ENCODE measurements at regions of chr18 and their contacts with region 1.

Region 1: GRCh38 chr18:79951578-79952455 is at the start of gene SLC66A2:
- DNase-seq: peak; percentile 80 to 98 (median 90)
- ATAC-seq: peak; percentile 94
- H3K4me3 ChIP-seq: peak within 1 kb of the TSS; percentile 65
- H3K4me3 Mint-ChIP-seq: peak within 1 kb of the TSS; percentile 78 to 93 (median 87)
- H3K27ac ChIP-seq: peak within 1 kb of the TSS; percentile 88
- H3K27ac Mint-ChIP-seq: peak within 1 kb of the TSS; percentile 55 to 90 (median 80)
- H3K4me1 ChIP-seq: peaks cover 7 to 25% of the 10 kb centered on the region in 2 donors
- H3K4me1 Mint-ChIP-seq: peaks cover 16 to 37% (median 32%) of the 10 kb centered on the region in 7 donors
- H3K27me3 ChIP-seq: no peaks in the 10 kb centered on the region
- H3K27me3 Mint-ChIP-seq: no peaks in the 10 kb centered on the region
- total RNA-seq, gene SLC66A2: 30.7 to 106 (median 40.4) TPM

Region 2: DNA sequence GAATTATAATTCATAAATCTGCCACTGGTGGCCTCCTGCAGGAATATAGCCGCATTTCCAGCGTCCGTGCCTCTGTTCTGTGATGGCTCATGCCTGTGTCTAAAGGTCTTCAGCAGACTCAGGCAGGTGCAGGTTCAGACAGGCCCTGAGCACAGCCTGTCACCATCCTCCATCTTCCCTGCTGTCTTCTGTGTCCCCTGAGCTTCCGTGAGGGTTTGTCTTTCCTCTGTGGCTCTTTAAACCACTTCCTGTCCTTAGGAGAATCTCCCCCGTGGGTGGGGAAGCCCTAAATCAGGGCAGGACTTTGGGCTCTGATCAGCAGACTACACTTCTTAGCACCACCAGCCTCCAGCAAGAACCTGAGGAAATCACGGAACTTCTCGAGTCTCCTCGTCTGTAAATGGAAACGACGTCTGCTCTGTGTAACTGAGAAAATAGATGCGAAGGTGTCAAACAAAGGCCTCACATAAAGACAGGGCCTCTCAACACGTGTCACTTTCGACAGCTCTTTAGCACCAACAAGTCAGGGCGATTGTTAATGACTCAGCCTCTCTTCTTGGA is 580.2 kb before region 1 on chr18:
- CTCF ChIA-PET with region 1: no interaction called
- POLR2A ChIA-PET with region 1: no interaction called
- intact Hi-C with region 1: loop called in 1 of 2 experiments (anchors 1 kb)
- DNase-seq: no peak
- ATAC-seq: no peak
- H3K4me3 ChIP-seq: no peak overlapping the region
- H3K4me3 Mint-ChIP-seq: peak overlapping the region in 7 of 10 donors; percentile 12 to 59 (median 42)
- H3K27ac ChIP-seq: no peak overlapping the region
- H3K27ac Mint-ChIP-seq: peak overlapping the region; percentile 28 to 84 (median 70)
- H3K4me1 ChIP-seq: peaks cover 6 to 15% of the 10 kb centered on the region in 2 donors
- H3K4me1 Mint-ChIP-seq: peaks cover 9 to 39% (median 33%) of the 10 kb centered on the region in 7 donors
- H3K27me3 ChIP-seq: no peaks in the 10 kb centered on the region
- H3K27me3 Mint-ChIP-seq: no peaks in the 10 kb centered on the region

Region 3: DNA sequence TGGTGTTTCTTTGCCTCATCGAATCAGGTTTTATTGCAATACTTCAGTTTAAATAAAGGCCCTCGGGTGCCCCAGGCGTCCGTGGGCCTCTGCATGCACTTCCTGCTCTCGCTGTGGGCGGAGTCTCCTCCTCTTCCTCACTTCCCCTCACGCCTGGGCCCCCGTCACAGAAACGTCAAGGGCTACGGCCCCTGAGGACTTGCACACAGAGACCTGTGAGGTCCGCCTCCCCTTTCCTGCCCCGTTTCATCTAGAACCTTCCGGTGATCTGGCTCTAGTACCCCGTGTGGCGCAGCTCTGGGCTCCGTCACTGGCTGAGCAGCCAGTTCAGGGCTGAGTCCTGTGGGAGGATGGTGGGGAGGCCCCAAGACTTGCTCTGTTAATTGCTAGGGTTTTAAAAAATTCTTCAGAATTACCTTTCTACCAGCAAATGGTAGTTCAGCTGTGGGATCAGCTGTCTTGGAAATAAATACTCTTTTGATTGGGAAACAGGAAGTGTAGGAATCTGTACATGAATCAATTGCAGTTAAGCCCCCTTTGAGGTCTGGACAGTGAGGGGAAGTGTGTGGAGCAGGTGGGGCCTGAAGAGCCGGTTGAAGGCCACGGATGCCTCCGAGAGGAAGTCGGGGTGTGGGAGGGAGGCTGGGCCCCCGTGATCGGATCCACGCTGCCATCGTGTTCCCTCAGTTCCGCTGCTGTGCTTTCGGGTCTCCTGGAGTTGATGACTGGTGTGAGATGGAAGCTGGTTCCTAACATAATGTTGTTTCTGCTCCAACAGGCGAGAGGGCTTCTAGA is 545.8 kb before region 1 on chr18:
- CTCF ChIA-PET with region 1: no interaction called
- POLR2A ChIA-PET with region 1: interaction called, 4 read pairs
- intact Hi-C with region 1: loop called (anchors 5 kb)
- DNase-seq: peak; percentile 68 to 97 (median 92)
- ATAC-seq: peak; percentile 91
- H3K4me3 ChIP-seq: peak overlapping the region; percentile 45
- H3K4me3 Mint-ChIP-seq: peak overlapping the region; percentile 89 to 98 (median 92)
- H3K27ac ChIP-seq: peak overlapping the region; percentile 92
- H3K27ac Mint-ChIP-seq: peak overlapping the region; percentile 96 to 100 (median 99)
- H3K4me1 ChIP-seq: peaks cover 34 to 54% of the 10 kb centered on the region in 2 donors
- H3K4me1 Mint-ChIP-seq: peaks cover 42 to 70% (median 54%) of the 10 kb centered on the region in 7 donors
- H3K27me3 ChIP-seq: no peaks in the 10 kb centered on the region
- H3K27me3 Mint-ChIP-seq: no peaks in the 10 kb centered on the region

Region 4: DNA sequence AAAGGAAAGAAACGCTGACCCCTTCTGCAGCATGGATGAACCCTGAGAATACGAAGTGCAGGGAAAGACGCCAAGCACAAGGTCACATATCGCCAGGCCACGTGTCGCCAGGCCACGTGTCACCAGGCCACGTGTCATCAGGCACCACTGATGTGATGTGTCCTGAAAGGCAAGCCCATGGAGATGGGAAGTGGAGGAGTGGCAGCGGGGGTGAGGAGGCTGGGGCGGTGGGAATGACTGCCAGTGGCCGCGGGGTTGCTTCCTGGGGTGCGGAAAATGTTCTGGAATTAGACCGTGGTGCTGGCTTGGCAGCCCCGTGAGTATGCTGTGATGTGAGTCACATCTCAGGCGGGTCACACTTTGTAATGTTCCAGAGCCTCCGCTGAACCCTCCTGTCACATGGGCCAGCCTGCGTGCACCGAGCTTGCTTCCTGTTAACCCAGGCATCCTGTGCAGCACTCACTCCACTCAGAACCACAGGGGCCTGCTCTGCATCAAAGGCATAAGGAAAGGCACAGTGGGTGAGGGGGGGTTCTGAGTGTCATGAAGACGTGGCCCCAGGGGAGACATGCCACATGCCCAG is 39.3 kb before region 1 on chr18:
- CTCF ChIA-PET with region 1: no interaction called
- POLR2A ChIA-PET with region 1: no interaction called
- intact Hi-C with region 1: loop called in 1 of 2 experiments (anchors 1 kb)
- DNase-seq: peak in 8 of 9 donors; percentile 20 to 63 (median 44)
- ATAC-seq: peak; percentile 37
- H3K4me3 ChIP-seq: no peak overlapping the region
- H3K4me3 Mint-ChIP-seq: peak overlapping the region in 7 of 10 donors; percentile 9 to 83 (median 49)
- H3K27ac ChIP-seq: peak overlapping the region; percentile 49
- H3K27ac Mint-ChIP-seq: peak overlapping the region in 7 of 9 donors; percentile 88 to 94 (median 91)
- H3K4me1 ChIP-seq: peaks cover 0 to 20% of the 10 kb centered on the region in 2 donors
- H3K4me1 Mint-ChIP-seq: peaks cover 18 to 42% (median 27%) of the 10 kb centered on the region in 7 donors
- H3K27me3 ChIP-seq: no peaks in the 10 kb centered on the region
- H3K27me3 Mint-ChIP-seq: no peaks in the 10 kb centered on the region

Region 5: GRCh38 chr18:79988451-79989194 is 36.8 kb after region 1 on chr18 and contains the start of gene TXNL4A:
- CTCF ChIA-PET with region 1: no interaction called
- POLR2A ChIA-PET with region 1: interaction called, 11 read pairs
- intact Hi-C with region 1: loop called (anchors 1 kb)
- DNase-seq: peak; percentile 76 to 88 (median 84)
- ATAC-seq: peak; percentile 97
- H3K4me3 ChIP-seq: peak within 1 kb of the TSS; percentile 94
- H3K4me3 Mint-ChIP-seq: peak within 1 kb of the TSS; percentile 80 to 97 (median 92)
- H3K27ac ChIP-seq: peak within 1 kb of the TSS; percentile 93
- H3K27ac Mint-ChIP-seq: peak within 1 kb of the TSS; percentile 85 to 98 (median 95)
- H3K4me1 ChIP-seq: peaks cover 20 to 27% of the 10 kb centered on the region in 2 donors
- H3K4me1 Mint-ChIP-seq: peaks cover 30 to 45% (median 38%) of the 10 kb centered on the region in 7 donors
- H3K27me3 ChIP-seq: no peaks in the 10 kb centered on the region
- H3K27me3 Mint-ChIP-seq: peaks cover 0 to 5% (median 0%) of the 10 kb centered on the region in 5 donors
- total RNA-seq, gene TXNL4A: 56.9 to 107 (median 69.7) TPM

Region 6: GRCh38 chr18:80108728-80109675 is 157.2 kb after region 1 on chr18 and contains the start of gene ADNP2:
- CTCF ChIA-PET with region 1: no interaction called
- POLR2A ChIA-PET with region 1: no interaction called
- intact Hi-C with region 1: loop called (anchors 1 to 2 kb)
- DNase-seq: peak; percentile 72 to 93 (median 89)
- ATAC-seq: peak; percentile 89
- H3K4me3 ChIP-seq: peak within 1 kb of the TSS; percentile 69
- H3K4me3 Mint-ChIP-seq: peak within 1 kb of the TSS; percentile 72 to 90 (median 86)
- H3K27ac ChIP-seq: peak within 1 kb of the TSS; percentile 85
- H3K27ac Mint-ChIP-seq: peak within 1 kb of the TSS; percentile 59 to 97 (median 93)
- H3K4me1 ChIP-seq: peaks cover 14 to 19% of the 10 kb centered on the region in 2 donors
- H3K4me1 Mint-ChIP-seq: peaks cover 23 to 58% (median 44%) of the 10 kb centered on the region in 7 donors
- H3K27me3 ChIP-seq: no peaks in the 10 kb centered on the region
- H3K27me3 Mint-ChIP-seq: peaks cover 0 to 3% (median 0%) of the 10 kb centered on the region in 5 donors
- total RNA-seq, gene ADNP2: 18.4 to 41.4 (median 25.3) TPM